OCI-LY7 (cell line): ENCODE measurements at regions of chr3 and their contacts with region 1.

Region 1: DNA sequence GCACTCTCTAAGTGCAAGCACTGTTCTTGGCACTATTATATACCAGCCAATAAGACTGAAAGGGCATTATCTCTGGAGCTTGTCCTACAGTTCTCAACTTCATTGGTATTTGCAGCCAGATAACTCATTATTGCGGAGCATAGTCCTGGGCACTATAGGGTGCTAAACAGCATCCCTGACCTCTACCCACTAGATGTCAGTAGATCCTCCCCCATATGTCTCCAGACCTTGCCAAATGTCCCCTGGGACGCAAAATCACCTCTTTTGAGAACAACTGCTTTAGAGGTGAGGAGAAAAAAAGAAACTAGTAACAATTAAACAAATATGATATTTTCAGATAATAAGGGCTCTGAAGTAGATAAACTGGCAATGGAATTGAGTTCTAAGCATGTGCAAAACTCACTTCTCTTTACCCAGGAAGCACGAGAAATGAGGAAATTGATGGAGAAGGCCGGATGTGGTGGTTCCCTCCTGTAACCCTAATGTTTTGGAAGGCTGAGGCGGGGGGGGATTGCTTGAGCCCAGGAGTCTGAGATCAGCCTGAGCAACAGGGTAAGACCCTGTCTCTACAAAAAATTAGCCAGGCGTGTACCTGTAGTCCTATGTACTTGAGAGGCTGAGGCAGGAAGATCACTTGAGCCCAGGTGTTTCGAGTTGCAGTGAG is 61.4 kb downstream of the FRMD4B start:
- DNase-seq: peak; percentile 78
- H3K4me3 ChIP-seq: peak overlapping the region; percentile 45
- H3K27ac ChIP-seq: peak overlapping the region; percentile 23
- H3K4me1 ChIP-seq: peaks cover 55% of the 10 kb centered on the region
- CTCF ChIP-seq: peak; percentile 83

Region 2: GRCh38 chr3:69065318-69065964 is 259.1 kb before region 1 on chr3:
- CTCF ChIA-PET with region 1: no interaction called
- POLR2A ChIA-PET with region 1: no interaction called
- intact Hi-C with region 1: no loop called
- DNase-seq: no peak
- H3K4me3 ChIP-seq: no peak overlapping the region
- H3K27ac ChIP-seq: no peak overlapping the region
- H3K4me1 ChIP-seq: no peaks in the 10 kb centered on the region
- CTCF ChIP-seq: no peak

Region 3: DNA sequence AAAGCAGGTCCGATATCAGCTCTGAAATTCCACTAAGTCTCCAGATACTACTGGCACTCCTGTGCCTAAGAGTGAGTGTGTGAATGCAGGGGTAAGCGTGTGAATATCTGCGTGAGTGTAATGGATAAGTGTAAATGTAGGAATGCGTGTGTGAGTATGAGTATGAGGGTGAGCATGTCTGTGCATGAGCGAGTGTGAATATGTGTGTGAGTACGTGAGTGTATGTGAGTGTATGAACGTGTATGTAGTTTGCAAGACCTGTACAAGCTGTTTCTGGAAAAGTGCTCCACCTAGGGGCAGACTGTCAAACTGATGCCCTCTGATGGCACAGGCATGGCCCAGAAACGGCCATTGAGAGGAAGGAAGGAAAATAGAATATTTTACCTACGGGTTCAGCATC is 85.8 kb after region 1 on chr3:
- CTCF ChIA-PET with region 1: no interaction called
- POLR2A ChIA-PET with region 1: no interaction called
- intact Hi-C with region 1: loop called (anchors 1 kb)
- DNase-seq: peak; percentile 63
- H3K4me3 ChIP-seq: no peak overlapping the region
- H3K27ac ChIP-seq: no peak overlapping the region
- H3K4me1 ChIP-seq: no peaks in the 10 kb centered on the region
- CTCF ChIP-seq: peak; percentile 81

Region 4: DNA sequence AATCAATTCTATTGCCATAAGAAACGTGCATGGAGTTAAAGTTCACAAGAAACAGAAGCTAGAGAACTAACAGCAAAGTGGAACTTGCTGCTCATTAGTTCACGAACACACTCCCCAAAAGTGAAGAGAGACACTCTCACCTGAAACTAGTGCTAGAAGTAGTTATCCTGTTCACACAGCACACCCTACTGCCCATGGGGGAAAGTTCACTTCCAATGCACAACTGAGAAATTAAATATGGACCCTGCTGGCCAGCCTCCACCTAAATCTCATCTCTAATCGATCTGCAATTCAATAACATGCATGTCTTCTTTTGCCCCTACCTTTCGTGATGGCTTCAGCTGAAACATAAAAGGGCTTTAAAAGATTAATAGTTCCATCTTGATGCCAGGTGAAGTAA is 100.8 kb after region 1 on chr3:
- CTCF ChIA-PET with region 1: no interaction called
- POLR2A ChIA-PET with region 1: no interaction called
- intact Hi-C with region 1: loop called (anchors 5 kb)
- DNase-seq: peak; percentile 45
- H3K4me3 ChIP-seq: no peak overlapping the region
- H3K27ac ChIP-seq: no peak overlapping the region
- H3K4me1 ChIP-seq: no peaks in the 10 kb centered on the region
- CTCF ChIP-seq: peak; percentile 69